ENCODE measurements at regions of chr3 and their contacts with region 1.

Region 1: DNA sequence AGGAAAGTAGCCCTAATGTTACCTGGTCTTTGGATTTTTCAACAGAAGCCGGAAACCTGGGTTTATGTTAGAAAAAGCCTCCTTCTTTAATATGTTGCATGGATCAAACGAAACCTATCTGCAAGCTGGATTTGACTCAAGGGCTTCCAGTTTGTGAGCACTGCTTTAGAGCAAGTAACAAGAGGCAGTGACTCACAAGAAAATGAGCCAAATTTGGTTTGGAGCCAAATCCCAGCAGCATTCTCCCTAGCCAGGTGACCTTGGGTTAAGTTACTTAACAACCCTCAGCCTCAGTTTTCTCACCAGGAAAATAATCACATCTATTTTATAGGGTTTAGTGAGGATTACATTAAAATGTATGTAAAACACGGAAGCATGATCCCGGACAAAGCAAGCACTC is 215.2 kb upstream of the PRICKLE2 start:
- DNase-seq: no peak
- ATAC-seq: no peak
- H3K4me3 ChIP-seq: no peak overlapping the region
- H3K27ac ChIP-seq: no peak overlapping the region
- H3K4me1 ChIP-seq: no peaks in the 10 kb centered on the region
- H3K27me3 ChIP-seq: peaks cover 3 to 4% of the 10 kb centered on the region in 2 experiments; a peak in 2 of 4 replicates
- CTCF ChIP-seq: no peak
- EP300 ChIP-seq: no peak
- POLR2A ChIP-seq: no peak
- RAD21 ChIP-seq: no peak

Region 2: GRCh38 chr3:64311424-64311976 is 129.0 kb before region 1 on chr3:
- CTCF ChIA-PET with region 1: no interaction called
- POLR2A ChIA-PET with region 1: no interaction called
- RAD21 ChIA-PET with region 1: no interaction called
- SMC1A ChIA-PET with region 1: no interaction called
- in situ Hi-C with region 1: no loop called
- intact Hi-C with region 1: no loop called
- DNase-seq: no peak
- ATAC-seq: no peak
- H3K4me3 ChIP-seq: no peak overlapping the region
- H3K27ac ChIP-seq: no peak overlapping the region
- H3K4me1 ChIP-seq: no peaks in the 10 kb centered on the region
- H3K27me3 ChIP-seq: no peaks in the 10 kb centered on the region
- CTCF ChIP-seq: no peak
- EP300 ChIP-seq: no peak
- POLR2A ChIP-seq: no peak
- RAD21 ChIP-seq: no peak

Region 3: GRCh38 chr3:64426551-64426950 is 13.9 kb before region 1 on chr3:
- CTCF ChIA-PET with region 1: interaction called, 10 read pairs
- POLR2A ChIA-PET with region 1: interaction called, 9 read pairs
- RAD21 ChIA-PET with region 1: interaction called, 13 read pairs
- SMC1A ChIA-PET with region 1: interaction called, 31 read pairs
- in situ Hi-C with region 1: no loop called
- intact Hi-C with region 1: no loop called
- DNase-seq: no peak
- ATAC-seq: no peak
- H3K4me3 ChIP-seq: no peak overlapping the region
- H3K27ac ChIP-seq: no peak overlapping the region
- H3K4me1 ChIP-seq: no peaks in the 10 kb centered on the region
- H3K27me3 ChIP-seq: no peaks in the 10 kb centered on the region
- CTCF ChIP-seq: no peak
- EP300 ChIP-seq: no peak
- POLR2A ChIP-seq: no peak
- RAD21 ChIP-seq: no peak